PC-3 (cell line): ENCODE measurements at regions of chr14 and their contacts with region 1.

Region 1: GRCh38 chr14:34496679-34497513 is 34.9 kb upstream of the SPTSSA start:
- DNase-seq: peak; percentile 98
- ATAC-seq: peak; percentile 94
- H3K4me3 ChIP-seq: peak overlapping the region; percentile 20; the same call in 1 of the 2 replicates
- H3K27ac ChIP-seq: peak overlapping the region; percentile 94
- H3K4me1 ChIP-seq: peaks cover 26% of the 10 kb centered on the region
- H3K27me3 ChIP-seq: no peaks in the 10 kb centered on the region
- CTCF ChIP-seq: peak; percentile 70

Region 2: DNA sequence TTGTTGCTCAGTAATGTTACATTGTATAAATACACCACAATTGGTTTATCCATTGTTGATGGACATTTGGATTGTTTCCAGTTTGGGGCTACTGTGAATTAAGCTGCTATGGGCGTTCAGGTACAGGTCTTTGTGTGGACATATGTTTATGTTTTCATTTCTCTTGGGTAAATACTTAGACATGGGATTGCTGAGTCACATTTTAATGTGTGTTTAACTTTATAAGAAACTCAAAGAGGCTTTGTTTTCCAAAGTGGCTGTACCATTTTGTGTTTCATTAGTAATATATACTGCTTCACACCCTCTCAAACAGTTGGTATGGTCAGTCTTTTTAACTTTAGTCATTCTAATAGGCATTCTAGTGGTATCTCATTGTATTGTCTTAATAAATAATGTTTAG is 259.8 kb before region 1 on chr14:
- CTCF ChIA-PET with region 1: no interaction called
- POLR2A ChIA-PET with region 1: no interaction called
- intact Hi-C with region 1: loop called (anchors 10 kb)
- DNase-seq: peak; percentile 92
- ATAC-seq: peak; percentile 94
- H3K4me3 ChIP-seq: no peak overlapping the region
- H3K27ac ChIP-seq: peak overlapping the region; percentile 57
- H3K4me1 ChIP-seq: peaks cover 25% of the 10 kb centered on the region
- H3K27me3 ChIP-seq: no peaks in the 10 kb centered on the region
- CTCF ChIP-seq: no peak

Region 3: GRCh38 chr14:34365309-34365915 is 131.5 kb before region 1 on chr14:
- CTCF ChIA-PET with region 1: interaction called, 17 read pairs
- POLR2A ChIA-PET with region 1: interaction called, 5 read pairs
- intact Hi-C with region 1: loop called (anchors 1 kb)
- DNase-seq: peak; percentile 29
- ATAC-seq: no peak
- H3K4me3 ChIP-seq: no peak overlapping the region
- H3K27ac ChIP-seq: peak overlapping the region; percentile 96
- H3K4me1 ChIP-seq: peaks cover 65% of the 10 kb centered on the region
- H3K27me3 ChIP-seq: no peaks in the 10 kb centered on the region
- CTCF ChIP-seq: peak; percentile 52

Region 4: GRCh38 chr14:34453229-34453628 is 43.7 kb before region 1 on chr14:
- CTCF ChIA-PET with region 1: no interaction called
- POLR2A ChIA-PET with region 1: no interaction called
- intact Hi-C with region 1: loop called (anchors 2 kb)
- DNase-seq: no peak
- ATAC-seq: no peak
- H3K4me3 ChIP-seq: no peak overlapping the region
- H3K27ac ChIP-seq: no peak overlapping the region
- H3K4me1 ChIP-seq: peaks cover 42% of the 10 kb centered on the region
- H3K27me3 ChIP-seq: no peaks in the 10 kb centered on the region
- CTCF ChIP-seq: no peak